PC-9 (cell line): ENCODE measurements at regions of chr13 and their contacts with region 1.

Region 1: DNA sequence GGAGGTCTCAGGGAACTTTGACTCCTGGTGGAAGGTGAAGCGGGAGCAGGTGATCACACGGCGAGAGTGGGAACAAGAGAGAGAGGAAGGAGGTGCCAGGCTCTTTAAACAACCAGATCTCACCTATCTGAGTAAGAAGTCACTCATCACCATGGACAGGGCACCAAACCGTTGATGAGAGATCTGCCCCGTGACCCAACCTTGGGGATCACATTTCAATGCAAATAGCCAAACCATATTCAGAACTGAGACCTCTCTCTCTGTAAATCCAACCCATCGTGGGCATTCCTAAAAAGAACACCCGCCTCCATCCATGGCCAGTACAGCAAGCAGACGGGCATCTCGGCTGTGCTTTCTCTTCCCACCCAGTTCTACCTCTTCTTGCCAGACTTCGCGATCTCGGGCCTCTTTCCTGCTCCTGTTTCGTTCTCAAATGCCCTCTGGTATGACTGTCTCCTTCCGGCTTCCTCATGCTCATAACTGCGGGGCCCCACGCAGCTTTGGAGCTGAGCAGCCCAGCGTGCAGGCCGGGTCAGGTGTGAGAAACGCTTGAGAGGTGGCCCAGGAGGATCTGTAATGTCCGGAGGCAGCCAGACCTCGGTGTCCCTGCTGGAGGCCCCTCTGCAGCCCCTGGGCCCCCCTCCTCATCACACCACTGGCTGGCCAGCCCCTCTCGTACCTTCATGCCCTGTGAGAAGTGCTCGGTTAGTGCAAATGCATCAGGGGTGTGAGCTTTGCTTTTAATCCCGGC is 97.0 kb upstream of the GPR183 start:
- DNase-seq: peak; percentile 57 to 66
- H3K4me3 ChIP-seq: peak overlapping the region; percentile 6; the same call in 1 of the 2 replicates
- H3K27ac ChIP-seq: no peak overlapping the region
- H3K4me1 ChIP-seq: peaks cover 6% of the 10 kb centered on the region
- H3K27me3 ChIP-seq: peaks cover 26% of the 10 kb centered on the region
- CTCF ChIP-seq: no peak

Region 2: GRCh38 chr13:98947925-98948324 is 456.3 kb before region 1 on chr13:
- CTCF ChIA-PET with region 1: no interaction called
- POLR2A ChIA-PET with region 1: no interaction called
- intact Hi-C with region 1: no loop called
- DNase-seq: no peak
- H3K4me3 ChIP-seq: no peak overlapping the region
- H3K27ac ChIP-seq: no peak overlapping the region
- H3K4me1 ChIP-seq: no peaks in the 10 kb centered on the region
- H3K27me3 ChIP-seq: no peaks in the 10 kb centered on the region
- CTCF ChIP-seq: no peak

Region 3: DNA sequence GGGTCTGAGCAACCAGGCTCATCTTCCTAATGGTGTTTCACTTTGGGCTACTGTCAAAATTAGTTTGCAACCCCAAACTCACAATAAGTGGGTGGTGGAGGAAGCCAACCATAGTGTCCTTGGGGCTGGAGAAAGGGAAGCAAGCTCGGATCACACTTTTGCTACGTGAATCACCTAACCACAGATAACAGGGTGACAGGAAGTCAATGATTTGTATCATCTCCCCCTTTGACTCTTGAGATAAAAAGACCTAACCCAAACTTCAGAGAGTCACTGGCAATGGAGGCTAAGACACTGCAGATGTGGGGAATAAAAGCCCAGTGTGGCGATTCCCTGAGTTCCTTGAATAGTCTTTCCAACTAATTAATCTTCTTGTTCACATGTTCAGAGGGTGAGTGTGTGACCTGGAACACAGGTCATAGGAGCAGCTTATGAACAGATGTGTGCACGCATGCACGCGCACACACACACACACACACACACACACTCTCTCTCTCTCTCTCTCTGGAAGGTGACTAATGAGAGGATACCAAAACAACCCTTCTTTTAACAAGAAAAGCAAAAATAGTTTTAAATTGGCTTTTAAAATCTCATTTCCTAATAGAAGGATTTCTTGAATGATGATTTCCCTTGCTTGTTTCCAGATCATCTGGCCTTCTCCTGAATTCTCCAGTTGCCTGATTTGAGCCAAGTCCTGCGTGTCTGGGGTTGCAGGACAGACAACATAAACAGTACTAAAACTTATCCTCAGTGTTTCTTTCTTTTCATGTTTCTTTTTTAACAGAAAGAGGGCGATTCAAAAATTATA is 405.1 kb before region 1 on chr13:
- CTCF ChIA-PET with region 1: no interaction called
- POLR2A ChIA-PET with region 1: interaction called, 10 read pairs
- intact Hi-C with region 1: no loop called
- DNase-seq: no peak
- H3K4me3 ChIP-seq: no peak overlapping the region
- H3K27ac ChIP-seq: no peak overlapping the region
- H3K4me1 ChIP-seq: peaks cover 17% of the 10 kb centered on the region
- H3K27me3 ChIP-seq: no peaks in the 10 kb centered on the region
- CTCF ChIP-seq: no peak

Region 4: GRCh38 chr13:99636728-99637353 is 232.7 kb after region 1 on chr13:
- CTCF ChIA-PET with region 1: no interaction called
- POLR2A ChIA-PET with region 1: no interaction called
- intact Hi-C with region 1: no loop called
- DNase-seq: no peak
- H3K4me3 ChIP-seq: no peak overlapping the region
- H3K27ac ChIP-seq: no peak overlapping the region
- H3K4me1 ChIP-seq: no peaks in the 10 kb centered on the region
- H3K27me3 ChIP-seq: no peaks in the 10 kb centered on the region
- CTCF ChIP-seq: no peak

Region 5: DNA sequence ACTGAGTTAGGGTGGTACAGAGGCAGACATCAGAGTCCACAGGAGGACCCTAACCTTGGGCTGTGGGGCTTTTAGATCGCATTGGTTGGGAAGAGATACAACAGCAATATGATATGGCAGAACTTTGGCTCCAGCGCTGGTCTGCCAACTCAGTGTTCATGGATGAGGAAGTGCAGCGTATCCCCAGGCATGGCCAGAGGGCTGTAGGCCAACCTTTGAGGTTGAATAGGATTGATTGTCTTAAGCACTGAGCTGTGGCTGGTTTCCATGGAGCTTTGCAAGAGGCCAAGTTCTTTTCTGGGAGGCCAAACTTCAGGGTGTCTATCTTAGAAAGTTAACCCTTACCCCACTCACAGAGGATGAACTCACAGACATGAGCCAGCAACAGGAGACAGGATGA is 1414.5 kb after region 1 on chr13:
- CTCF ChIA-PET with region 1: no interaction called
- POLR2A ChIA-PET with region 1: no interaction called
- intact Hi-C with region 1: no loop called
- DNase-seq: no peak
- H3K4me3 ChIP-seq: no peak overlapping the region
- H3K27ac ChIP-seq: no peak overlapping the region
- H3K4me1 ChIP-seq: no peaks in the 10 kb centered on the region
- H3K27me3 ChIP-seq: peaks cover 36% of the 10 kb centered on the region
- CTCF ChIP-seq: no peak